CD8-positive, alpha-beta memory T cell (primary cell): ENCODE measurements at regions of chr1 and their contacts with region 1.

Region 1: GRCh38 chr1:117911051-117911450 is 18.4 kb downstream of the GDAP2 start:
- DNase-seq: no peak
- H3K4me3 ChIP-seq: no peak overlapping the region
- H3K4me3 Mint-ChIP-seq: no peak overlapping the region
- H3K27ac ChIP-seq: no peak overlapping the region
- H3K27ac Mint-ChIP-seq: no peak overlapping the region
- H3K4me1 ChIP-seq: no peaks in the 10 kb centered on the region
- H3K4me1 Mint-ChIP-seq: peaks cover 4 to 20% (median 8%) of the 10 kb centered on the region in 3 donors
- H3K27me3 ChIP-seq: no peaks in the 10 kb centered on the region
- H3K27me3 Mint-ChIP-seq: peaks cover 0 to 1% of the 10 kb centered on the region in 2 donors

Region 2: GRCh38 chr1:117895482-117896114 is 15.5 kb before region 1 on chr1:
- CTCF ChIA-PET with region 1: interaction called, 14 read pairs
- POLR2A ChIA-PET with region 1: no interaction called
- DNase-seq: peak; percentile 18 to 60 (median 33)
- H3K4me3 ChIP-seq: no peak overlapping the region
- H3K4me3 Mint-ChIP-seq: no peak overlapping the region
- H3K27ac ChIP-seq: no peak overlapping the region
- H3K27ac Mint-ChIP-seq: peak overlapping the region in 6 of 8 donors; percentile 1 to 51 (median 10)
- H3K4me1 ChIP-seq: no peaks in the 10 kb centered on the region
- H3K4me1 Mint-ChIP-seq: peaks cover 1 to 5% (median 4%) of the 10 kb centered on the region in 3 donors
- H3K27me3 ChIP-seq: no peaks in the 10 kb centered on the region
- H3K27me3 Mint-ChIP-seq: no peaks in the 10 kb centered on the region